CD4-positive, alpha-beta memory T cell (primary cell): ENCODE measurements at regions of chr2 and their contacts with region 1.

Region 1: DNA sequence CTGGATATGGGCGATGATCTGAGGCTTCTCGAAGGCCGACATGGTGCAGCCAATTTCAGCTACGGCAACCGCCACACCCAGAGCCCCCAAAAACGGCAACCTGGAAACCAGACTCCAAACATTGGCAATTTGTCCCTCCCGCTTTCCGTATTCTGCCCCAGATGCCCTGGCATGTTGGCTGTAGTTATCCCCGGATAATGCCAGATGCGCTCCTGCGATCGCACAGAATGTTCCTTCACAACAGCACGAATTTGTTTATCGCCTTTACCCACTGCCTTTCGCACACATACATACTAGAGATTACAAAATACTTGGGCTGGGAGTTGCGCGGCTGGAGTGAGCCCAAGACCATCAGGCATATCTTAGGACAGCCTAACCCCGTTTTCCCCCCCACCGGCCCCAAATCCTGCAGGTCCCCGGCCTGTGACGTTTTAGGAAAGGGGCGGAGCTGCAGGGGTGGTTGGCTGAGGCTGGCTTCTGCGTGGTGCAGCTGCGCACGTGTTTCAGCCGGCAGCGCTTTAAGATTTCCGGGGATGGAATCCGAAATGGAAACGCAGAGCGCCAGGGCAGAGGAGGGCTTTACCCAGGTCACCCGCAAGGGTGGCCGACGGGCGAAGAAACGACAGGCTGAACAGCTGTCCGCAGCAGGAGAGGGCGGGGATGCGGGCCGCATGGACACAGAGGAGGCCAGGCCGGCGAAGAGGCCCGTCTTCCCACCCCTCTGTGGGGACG is at the start of gene PNO1:
- DNase-seq: peak; percentile 97 to 98 (median 98)
- H3K4me3 ChIP-seq: peak within 1 kb of the TSS; percentile 82 to 97
- H3K4me3 Mint-ChIP-seq: peak within 1 kb of the TSS; percentile 95 to 99 (median 98)
- H3K27ac ChIP-seq: peak within 1 kb of the TSS; percentile 97
- H3K27ac Mint-ChIP-seq: peak within 1 kb of the TSS; percentile 99 to 100 (median 100)
- H3K4me1 ChIP-seq: peaks cover 40% of the 10 kb centered on the region
- H3K4me1 Mint-ChIP-seq: peaks cover 29 to 65% (median 45%) of the 10 kb centered on the region in 4 donors
- H3K27me3 ChIP-seq: no peaks in the 10 kb centered on the region
- H3K27me3 Mint-ChIP-seq: peaks cover 0 to 2% of the 10 kb centered on the region in 2 donors
- total RNA-seq, gene PNO1: 8.7 to 11.3 TPM

Region 2: GRCh38 chr2:68062680-68063387 is 94.7 kb before region 1 on chr2 and contains the start of gene C1D:
- CTCF ChIA-PET with region 1: interaction called, 4 read pairs
- POLR2A ChIA-PET with region 1: interaction called, 12 read pairs
- intact Hi-C with region 1: loop called (anchors 1 kb)
- DNase-seq: peak; percentile 89 to 92 (median 90)
- H3K4me3 ChIP-seq: peak within 1 kb of the TSS; percentile 93 to 100
- H3K4me3 Mint-ChIP-seq: peak within 1 kb of the TSS; percentile 95 to 98 (median 96)
- H3K27ac ChIP-seq: peak within 1 kb of the TSS; percentile 98
- H3K27ac Mint-ChIP-seq: peak within 1 kb of the TSS; percentile 89 to 99 (median 98)
- H3K4me1 ChIP-seq: peaks cover 44% of the 10 kb centered on the region
- H3K4me1 Mint-ChIP-seq: peaks cover 32 to 52% (median 38%) of the 10 kb centered on the region in 4 donors
- H3K27me3 ChIP-seq: no peaks in the 10 kb centered on the region
- H3K27me3 Mint-ChIP-seq: peaks cover 6 to 9% of the 10 kb centered on the region in 2 donors
- total RNA-seq, gene C1D: 12.4 to 13.4 TPM

Region 3: GRCh38 chr2:68169297-68169696 is 11.7 kb after region 1 on chr2:
- CTCF ChIA-PET with region 1: interaction called, 7 read pairs
- POLR2A ChIA-PET with region 1: interaction called, 19 read pairs
- intact Hi-C with region 1: no loop called
- DNase-seq: no peak
- H3K4me3 ChIP-seq: no peak overlapping the region
- H3K4me3 Mint-ChIP-seq: no peak overlapping the region
- H3K27ac ChIP-seq: no peak overlapping the region
- H3K27ac Mint-ChIP-seq: peak overlapping the region in 1 of 7 donors; percentile 36
- H3K4me1 ChIP-seq: no peaks in the 10 kb centered on the region
- H3K4me1 Mint-ChIP-seq: peaks cover 12 to 21% (median 15%) of the 10 kb centered on the region in 4 donors
- H3K27me3 ChIP-seq: no peaks in the 10 kb centered on the region
- H3K27me3 Mint-ChIP-seq: no peaks in the 10 kb centered on the region

Region 4: DNA sequence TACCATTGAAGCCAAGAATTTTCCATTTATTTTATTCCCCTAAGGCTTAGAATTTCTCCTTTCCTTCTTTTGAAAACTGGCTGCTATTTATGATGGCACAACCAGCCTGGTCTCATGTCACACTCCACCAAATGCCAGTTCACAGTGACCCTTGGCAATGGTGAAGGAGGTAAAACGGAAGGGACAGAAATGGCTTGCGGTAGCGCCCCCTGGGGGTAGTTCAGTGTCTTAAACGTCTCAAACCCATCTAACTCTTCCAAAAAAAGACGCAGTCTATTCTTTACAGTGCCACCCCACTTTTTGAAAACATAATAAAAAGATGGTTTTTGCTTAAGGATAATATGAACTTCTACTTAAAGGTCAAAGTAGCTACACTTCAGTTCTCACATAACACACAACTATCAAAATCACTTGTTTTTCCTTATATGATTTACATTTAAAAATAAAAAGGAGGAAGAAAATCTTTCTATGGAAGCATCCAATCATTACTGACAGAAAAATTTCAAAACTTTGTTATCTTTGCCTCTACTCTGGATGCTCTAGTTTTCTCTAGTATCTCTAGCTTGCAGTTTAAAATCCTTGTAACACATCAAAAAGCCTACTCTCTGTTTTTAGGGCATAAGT is 28.1 kb after region 1 on chr2:
- CTCF ChIA-PET with region 1: interaction called, 20 read pairs
- POLR2A ChIA-PET with region 1: interaction called, 3 read pairs
- intact Hi-C with region 1: no loop called
- DNase-seq: peak; percentile 42 to 59 (median 45)
- H3K4me3 ChIP-seq: no peak overlapping the region
- H3K4me3 Mint-ChIP-seq: no peak overlapping the region
- H3K27ac ChIP-seq: no peak overlapping the region
- H3K27ac Mint-ChIP-seq: peak overlapping the region in 6 of 7 donors; percentile 30 to 89 (median 54)
- H3K4me1 ChIP-seq: peaks cover 16% of the 10 kb centered on the region
- H3K4me1 Mint-ChIP-seq: peaks cover 18 to 35% (median 33%) of the 10 kb centered on the region in 4 donors
- H3K27me3 ChIP-seq: no peaks in the 10 kb centered on the region
- H3K27me3 Mint-ChIP-seq: no peaks in the 10 kb centered on the region

Region 5: GRCh38 chr2:68319398-68320117 is 162.0 kb after region 1 on chr2 and contains the start of gene CNRIP1:
- CTCF ChIA-PET with region 1: no interaction called
- POLR2A ChIA-PET with region 1: no interaction called
- intact Hi-C with region 1: no loop called
- DNase-seq: no peak
- H3K4me3 ChIP-seq: peak within 1 kb of the TSS in 1 of 2 donors; percentile 14
- H3K4me3 Mint-ChIP-seq: peak within 1 kb of the TSS; percentile 70 to 89 (median 84)
- H3K27ac ChIP-seq: no peak within 1 kb of the TSS
- H3K27ac Mint-ChIP-seq: no peak within 1 kb of the TSS
- H3K4me1 ChIP-seq: peaks cover 14% of the 10 kb centered on the region
- H3K4me1 Mint-ChIP-seq: peaks cover 6 to 18% (median 13%) of the 10 kb centered on the region in 4 donors
- H3K27me3 ChIP-seq: peaks cover 16% of the 10 kb centered on the region
- H3K27me3 Mint-ChIP-seq: peaks cover 34 to 53% of the 10 kb centered on the region in 2 donors
- total RNA-seq, gene CNRIP1: 0.29 TPM in 1 of 2 experiments, not detected in the other

Region 6: GRCh38 chr2:68726608-68727367 is 569.2 kb after region 1 on chr2:
- CTCF ChIA-PET with region 1: no interaction called
- POLR2A ChIA-PET with region 1: no interaction called
- intact Hi-C with region 1: loop called (anchors 5 kb)
- DNase-seq: peak; percentile 78 to 93 (median 81)
- H3K4me3 ChIP-seq: peak overlapping the region; percentile 6 to 9
- H3K4me3 Mint-ChIP-seq: peak overlapping the region; percentile 18 to 73 (median 58)
- H3K27ac ChIP-seq: peak overlapping the region; percentile 44
- H3K27ac Mint-ChIP-seq: peak overlapping the region; percentile 83 to 95 (median 88)
- H3K4me1 ChIP-seq: peaks cover 74% of the 10 kb centered on the region
- H3K4me1 Mint-ChIP-seq: peaks cover 57 to 85% (median 72%) of the 10 kb centered on the region in 4 donors
- H3K27me3 ChIP-seq: no peaks in the 10 kb centered on the region
- H3K27me3 Mint-ChIP-seq: no peaks in the 10 kb centered on the region

Region 7: DNA sequence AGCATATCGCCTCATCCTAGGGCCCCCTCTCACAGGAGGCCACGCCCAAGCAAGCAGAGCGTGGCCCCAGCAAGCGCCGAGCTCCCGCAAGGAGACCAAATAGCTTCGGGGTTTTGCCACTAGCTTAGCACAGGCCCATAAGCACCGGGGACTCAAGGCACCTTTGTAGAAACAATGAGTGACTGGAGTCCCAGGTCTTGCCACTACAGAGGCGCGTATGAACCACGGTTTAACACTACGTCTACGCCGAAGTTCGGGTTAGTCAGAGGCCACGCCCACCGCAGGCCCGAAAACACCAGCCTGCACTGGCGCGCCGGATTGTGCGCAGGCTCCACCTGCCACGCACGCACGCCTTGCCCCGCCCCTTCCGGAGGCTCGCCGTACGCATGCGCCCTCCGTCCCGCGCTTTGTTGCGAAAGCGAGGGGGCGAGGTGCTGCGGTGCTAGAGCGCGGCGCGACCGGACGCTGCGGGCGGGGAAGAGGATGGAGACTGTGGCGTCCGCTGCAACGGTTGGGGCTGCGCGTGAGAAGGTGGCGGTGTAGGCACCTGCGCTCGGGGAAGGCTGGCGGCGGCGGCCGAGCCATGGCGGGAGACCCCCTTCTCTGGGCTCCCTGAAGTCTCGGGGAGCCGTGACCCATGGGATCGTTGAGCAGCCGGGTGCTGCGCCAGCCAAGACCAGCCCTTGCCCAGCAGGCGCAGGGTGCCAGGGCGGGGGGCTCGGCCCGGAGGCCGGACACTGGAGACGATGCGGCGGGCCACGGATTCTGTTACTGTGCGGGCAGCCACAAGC is 1671.9 kb after region 1 on chr2 and contains the start of gene GMCL1:
- CTCF ChIA-PET with region 1: no interaction called
- POLR2A ChIA-PET with region 1: no interaction called
- intact Hi-C with region 1: loop called (anchors 10 kb)
- DNase-seq: peak; percentile 98 to 99 (median 99)
- H3K4me3 ChIP-seq: peak within 1 kb of the TSS; percentile 54 to 71
- H3K4me3 Mint-ChIP-seq: peak within 1 kb of the TSS; percentile 87 to 98 (median 96)
- H3K27ac ChIP-seq: peak within 1 kb of the TSS; percentile 92
- H3K27ac Mint-ChIP-seq: peak within 1 kb of the TSS; percentile 93 to 98 (median 96)
- H3K4me1 ChIP-seq: peaks cover 42% of the 10 kb centered on the region
- H3K4me1 Mint-ChIP-seq: peaks cover 21 to 69% (median 43%) of the 10 kb centered on the region in 4 donors
- H3K27me3 ChIP-seq: no peaks in the 10 kb centered on the region
- H3K27me3 Mint-ChIP-seq: no peaks in the 10 kb centered on the region
- total RNA-seq, gene GMCL1: 28.2 to 31.8 TPM